Activated B cell treated with CpG ODN at 0.5 μM for 24 hours (primary cell): ENCODE measurements at regions of chr14 and their contacts with region 1.

Region 1: GRCh38 chr14:67943947-67944346 is 124.4 kb downstream of the RAD51B start:
- DNase-seq: no peak
- ATAC-seq: peak; percentile 54
- H3K4me3 Mint-ChIP-seq: no peak overlapping the region
- H3K27ac Mint-ChIP-seq: no peak overlapping the region
- H3K4me1 Mint-ChIP-seq: peaks cover 8% of the 10 kb centered on the region
- H3K27me3 Mint-ChIP-seq: no peaks in the 10 kb centered on the region
- CTCF ChIP-seq: no peak

Region 2: GRCh38 chr14:67999693-68000384 is 55.9 kb after region 1 on chr14:
- CTCF ChIA-PET with region 1: no interaction called
- POLR2A ChIA-PET with region 1: interaction called, 10 read pairs
- intact Hi-C with region 1: no loop called
- DNase-seq: no peak
- ATAC-seq: no peak
- H3K4me3 Mint-ChIP-seq: no peak overlapping the region
- H3K27ac Mint-ChIP-seq: no peak overlapping the region
- H3K4me1 Mint-ChIP-seq: peaks cover 20% of the 10 kb centered on the region
- H3K27me3 Mint-ChIP-seq: no peaks in the 10 kb centered on the region
- CTCF ChIP-seq: no peak

Region 3: GRCh38 chr14:68408680-68409079 is 464.7 kb after region 1 on chr14:
- CTCF ChIA-PET with region 1: interaction called, 3 read pairs
- POLR2A ChIA-PET with region 1: no interaction called
- intact Hi-C with region 1: loop called (anchors 10 kb)
- DNase-seq: no peak
- ATAC-seq: peak; percentile 53
- H3K4me3 Mint-ChIP-seq: peak overlapping the region; percentile 16
- H3K27ac Mint-ChIP-seq: peak overlapping the region; percentile 80
- H3K4me1 Mint-ChIP-seq: peaks cover 75% of the 10 kb centered on the region
- H3K27me3 Mint-ChIP-seq: no peaks in the 10 kb centered on the region
- CTCF ChIP-seq: no peak